IMR-90 (cell line): ENCODE measurements at regions of chr17 and their contacts with region 1.

Region 1: DNA sequence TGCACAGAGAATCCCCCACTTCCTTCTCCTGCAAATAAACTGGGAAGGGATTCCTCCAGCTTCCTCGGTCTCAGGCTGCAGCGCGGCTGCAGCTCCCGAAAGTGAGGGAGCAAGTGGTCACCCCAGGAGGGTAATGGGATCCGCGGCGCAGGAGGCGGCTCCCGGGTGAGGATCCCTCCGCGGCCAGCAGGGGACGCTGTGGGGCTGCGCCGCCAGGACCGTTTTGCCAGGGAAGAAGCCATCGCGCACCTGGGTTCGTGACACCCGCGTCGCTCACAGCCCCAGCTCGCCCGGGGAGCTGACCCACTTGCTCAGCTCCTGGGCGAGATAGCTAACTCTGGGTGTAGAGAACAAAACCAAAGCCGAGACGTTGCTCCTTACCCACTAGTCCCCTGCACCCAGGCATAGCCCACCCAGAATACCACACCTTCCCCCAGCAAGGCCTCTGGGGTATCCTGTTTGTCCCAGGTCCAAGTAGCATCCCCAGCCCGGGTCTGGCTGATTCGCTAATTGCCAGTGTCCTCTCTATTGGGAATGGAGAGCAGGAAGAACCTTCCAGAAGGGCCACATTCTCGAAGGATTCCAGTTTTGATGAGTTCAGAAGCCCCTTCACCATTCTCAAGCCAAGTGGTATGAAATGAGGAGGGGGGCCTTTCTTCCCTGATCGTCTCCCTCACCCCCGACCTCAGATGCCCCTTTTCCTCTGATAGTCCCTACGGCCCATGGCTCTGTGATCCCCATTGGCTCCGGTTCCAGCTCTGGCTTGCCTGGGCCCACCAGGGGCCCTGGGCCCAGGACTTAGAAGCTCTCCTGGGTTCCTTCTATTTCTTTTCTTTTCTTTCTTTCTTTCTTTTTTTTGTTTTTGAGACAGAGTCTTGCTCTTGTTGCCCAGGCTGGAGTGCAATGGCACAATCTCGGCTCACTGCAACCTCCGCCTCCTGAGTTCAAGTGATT is 14.1 kb downstream of the CYGB start:
- DNase-seq: peak; percentile 50
- ATAC-seq: peak; percentile 75
- H3K4me3 ChIP-seq: no peak overlapping the region
- H3K27ac ChIP-seq: no peak overlapping the region
- H3K4me1 ChIP-seq: peaks cover 25% of the 10 kb centered on the region
- H3K27me3 ChIP-seq: no peaks in the 10 kb centered on the region
- CTCF ChIP-seq: peak; percentile 96
- POLR2A ChIP-seq: peak; percentile 53
- RAD21 ChIP-seq: peak; percentile 95

Region 2: DNA sequence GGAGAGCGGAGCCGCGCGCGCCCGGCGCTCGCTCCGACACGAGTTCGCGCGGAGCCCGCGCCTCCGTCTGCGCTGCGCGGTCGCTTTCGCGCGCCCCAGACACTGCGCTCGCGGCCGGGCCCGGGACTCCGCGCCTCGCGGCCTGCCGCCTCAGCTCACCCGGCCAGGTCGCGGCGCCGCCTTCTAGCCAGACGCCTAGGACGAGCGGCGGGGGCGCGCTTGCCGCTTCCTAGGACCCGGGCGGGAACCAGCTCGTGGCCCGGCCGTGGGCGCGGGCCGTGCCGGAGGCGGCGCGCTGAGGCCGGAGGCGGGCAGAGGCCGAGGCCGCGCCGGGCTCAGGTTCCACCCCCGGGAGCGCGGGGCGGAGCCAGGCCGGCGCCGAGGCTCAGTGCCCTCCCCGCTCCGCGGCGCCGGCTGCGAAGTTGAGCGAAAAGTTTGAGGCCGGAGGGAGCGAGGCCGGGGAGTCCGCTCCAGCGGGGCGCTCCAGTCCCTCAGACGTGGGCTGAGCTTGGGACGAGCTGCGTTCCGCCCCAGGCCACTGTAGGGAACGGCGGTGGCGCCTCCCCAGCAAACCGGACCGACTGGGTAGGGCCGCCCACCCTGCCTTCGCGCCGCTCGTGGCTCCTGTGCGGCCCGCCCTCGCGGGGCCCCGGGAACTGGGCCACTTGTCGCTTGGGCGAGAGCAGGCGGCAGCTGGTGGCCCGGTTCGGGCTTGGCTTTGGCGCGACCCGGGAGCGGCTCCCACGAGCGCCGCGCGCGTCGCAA is 139.0 kb before region 1 on chr17 and contains the start of gene SPHK1:
- CTCF ChIA-PET with region 1: no interaction called
- POLR2A ChIA-PET with region 1: no interaction called
- dilution Hi-C with region 1: no loop called
- in situ Hi-C with region 1: no loop called
- intact Hi-C with region 1: no loop called
- DNase-seq: peak; percentile 81
- ATAC-seq: peak; percentile 79
- H3K4me3 ChIP-seq: peak within 1 kb of the TSS; percentile 80
- H3K27ac ChIP-seq: peak within 1 kb of the TSS; percentile 95
- H3K4me1 ChIP-seq: peaks cover 13% of the 10 kb centered on the region
- H3K27me3 ChIP-seq: no peaks in the 10 kb centered on the region
- CTCF ChIP-seq: no peak
- POLR2A ChIP-seq: peak; percentile 86
- RAD21 ChIP-seq: no peak; the same call in 1 of the 2 replicates
- total RNA-seq, gene SPHK1: 44.4 and 45.8 TPM in 2 replicates

Region 3: DNA sequence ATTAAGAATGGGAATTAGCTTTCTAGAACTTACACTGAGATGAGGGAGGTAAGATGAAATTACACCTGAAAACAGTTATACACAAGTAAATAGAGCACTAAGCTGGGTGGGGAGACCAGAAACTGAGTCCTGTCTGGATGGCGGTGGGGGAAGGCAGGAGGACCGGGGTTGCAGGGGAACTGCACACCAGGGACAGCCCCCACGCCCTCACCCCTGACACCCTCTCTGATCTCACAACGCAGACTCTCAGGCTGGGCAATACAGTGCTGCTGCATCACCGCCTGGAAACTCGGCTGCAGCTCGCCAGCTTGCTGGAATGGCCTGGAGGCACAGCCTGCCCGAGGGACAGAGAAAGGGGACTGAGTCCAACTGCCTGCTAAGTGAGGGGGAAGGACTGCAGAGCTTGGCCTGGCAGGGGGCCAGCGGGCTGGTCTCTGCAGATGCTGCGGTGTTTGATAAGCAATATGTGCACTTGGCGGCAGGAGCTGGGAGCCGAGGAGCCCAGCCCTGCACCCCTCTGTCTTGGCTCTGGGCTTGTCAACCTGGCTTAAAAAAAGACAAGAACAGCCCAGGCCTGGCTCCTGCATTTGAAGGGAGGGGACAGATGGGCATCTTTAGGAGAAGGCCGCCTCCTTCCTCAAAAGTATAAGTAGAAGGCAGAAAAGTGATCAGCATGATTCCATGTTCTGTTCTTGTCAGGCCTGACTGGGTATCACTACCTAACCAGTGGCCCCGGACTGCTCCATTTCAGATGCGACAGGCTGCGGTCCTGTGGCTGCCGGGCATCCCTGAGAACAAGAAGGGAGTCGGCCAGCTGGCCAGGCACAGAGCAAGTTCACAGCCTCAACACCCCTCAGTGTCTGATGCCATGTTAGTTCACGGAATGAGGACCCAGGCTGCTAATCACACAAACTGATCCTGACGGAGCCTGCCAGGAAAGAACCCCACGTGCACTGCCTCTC is 108.7 kb before region 1 on chr17:
- CTCF ChIA-PET with region 1: no interaction called
- POLR2A ChIA-PET with region 1: no interaction called
- dilution Hi-C with region 1: no loop called
- in situ Hi-C with region 1: no loop called
- intact Hi-C with region 1: no loop called
- DNase-seq: peak; percentile 69
- ATAC-seq: peak; percentile 86
- H3K4me3 ChIP-seq: no peak overlapping the region
- H3K27ac ChIP-seq: no peak overlapping the region
- H3K4me1 ChIP-seq: peaks cover 7% of the 10 kb centered on the region
- H3K27me3 ChIP-seq: no peaks in the 10 kb centered on the region
- CTCF ChIP-seq: no peak
- POLR2A ChIP-seq: no peak
- RAD21 ChIP-seq: no peak

Region 4: GRCh38 chr17:76540381-76541300 is 17.3 kb after region 1 on chr17:
- CTCF ChIA-PET with region 1: interaction called, 18 read pairs
- POLR2A ChIA-PET with region 1: interaction called, 3 read pairs
- dilution Hi-C with region 1: no loop called
- in situ Hi-C with region 1: no loop called
- intact Hi-C with region 1: no loop called
- DNase-seq: peak; percentile 94
- ATAC-seq: peak; percentile 98
- H3K4me3 ChIP-seq: peak overlapping the region; percentile 27; the same call in 1 of the 2 replicates
- H3K27ac ChIP-seq: peak overlapping the region; percentile 62
- H3K4me1 ChIP-seq: peaks cover 9% of the 10 kb centered on the region
- H3K27me3 ChIP-seq: peaks cover 2% of the 10 kb centered on the region; the same call in 1 of the 2 replicates
- CTCF ChIP-seq: 0 out of 2 replicates have a peak, but pooled peaks have one; percentile 2
- POLR2A ChIP-seq: no peak
- RAD21 ChIP-seq: no peak

Region 5: GRCh38 chr17:76547184-76547641 is 23.9 kb after region 1 on chr17:
- CTCF ChIA-PET with region 1: interaction called, 12 read pairs
- POLR2A ChIA-PET with region 1: interaction called, 3 read pairs
- dilution Hi-C with region 1: no loop called
- in situ Hi-C with region 1: no loop called
- intact Hi-C with region 1: loop called (anchors 1 kb)
- DNase-seq: peak; percentile 85
- ATAC-seq: peak; percentile 79
- H3K4me3 ChIP-seq: no peak overlapping the region
- H3K27ac ChIP-seq: peak overlapping the region; percentile 38
- H3K4me1 ChIP-seq: peaks cover 20% of the 10 kb centered on the region
- H3K27me3 ChIP-seq: no peaks in the 10 kb centered on the region
- CTCF ChIP-seq: peak; percentile 88
- POLR2A ChIP-seq: no peak
- RAD21 ChIP-seq: peak; percentile 85

Region 6: GRCh38 chr17:76612977-76613851 is 89.9 kb after region 1 on chr17:
- CTCF ChIA-PET with region 1: no interaction called
- POLR2A ChIA-PET with region 1: no interaction called
- dilution Hi-C with region 1: no loop called
- in situ Hi-C with region 1: no loop called
- intact Hi-C with region 1: no loop called
- DNase-seq: no peak
- ATAC-seq: no peak
- H3K4me3 ChIP-seq: no peak overlapping the region
- H3K27ac ChIP-seq: no peak overlapping the region
- H3K4me1 ChIP-seq: no peaks in the 10 kb centered on the region
- H3K27me3 ChIP-seq: 0 out of 2 replicates have a peak, but pooled peaks cover 2% of the 10 kb centered on the region
- CTCF ChIP-seq: no peak
- POLR2A ChIP-seq: no peak
- RAD21 ChIP-seq: no peak

Region 7: GRCh38 chr17:76623271-76624146 is 100.1 kb after region 1 on chr17:
- CTCF ChIA-PET with region 1: interaction called, 7 read pairs
- POLR2A ChIA-PET with region 1: no interaction called
- dilution Hi-C with region 1: no loop called
- in situ Hi-C with region 1: loop called (anchors 5 kb)
- intact Hi-C with region 1: loop called (anchors 1 kb)
- DNase-seq: peak; percentile 60
- ATAC-seq: peak; percentile 100
- H3K4me3 ChIP-seq: no peak overlapping the region
- H3K27ac ChIP-seq: no peak overlapping the region
- H3K4me1 ChIP-seq: peaks cover 2% of the 10 kb centered on the region; the same call in 1 of the 2 replicates
- H3K27me3 ChIP-seq: peaks cover 17% of the 10 kb centered on the region
- CTCF ChIP-seq: peak; percentile 94
- POLR2A ChIP-seq: no peak
- RAD21 ChIP-seq: peak; percentile 92

Region 8: DNA sequence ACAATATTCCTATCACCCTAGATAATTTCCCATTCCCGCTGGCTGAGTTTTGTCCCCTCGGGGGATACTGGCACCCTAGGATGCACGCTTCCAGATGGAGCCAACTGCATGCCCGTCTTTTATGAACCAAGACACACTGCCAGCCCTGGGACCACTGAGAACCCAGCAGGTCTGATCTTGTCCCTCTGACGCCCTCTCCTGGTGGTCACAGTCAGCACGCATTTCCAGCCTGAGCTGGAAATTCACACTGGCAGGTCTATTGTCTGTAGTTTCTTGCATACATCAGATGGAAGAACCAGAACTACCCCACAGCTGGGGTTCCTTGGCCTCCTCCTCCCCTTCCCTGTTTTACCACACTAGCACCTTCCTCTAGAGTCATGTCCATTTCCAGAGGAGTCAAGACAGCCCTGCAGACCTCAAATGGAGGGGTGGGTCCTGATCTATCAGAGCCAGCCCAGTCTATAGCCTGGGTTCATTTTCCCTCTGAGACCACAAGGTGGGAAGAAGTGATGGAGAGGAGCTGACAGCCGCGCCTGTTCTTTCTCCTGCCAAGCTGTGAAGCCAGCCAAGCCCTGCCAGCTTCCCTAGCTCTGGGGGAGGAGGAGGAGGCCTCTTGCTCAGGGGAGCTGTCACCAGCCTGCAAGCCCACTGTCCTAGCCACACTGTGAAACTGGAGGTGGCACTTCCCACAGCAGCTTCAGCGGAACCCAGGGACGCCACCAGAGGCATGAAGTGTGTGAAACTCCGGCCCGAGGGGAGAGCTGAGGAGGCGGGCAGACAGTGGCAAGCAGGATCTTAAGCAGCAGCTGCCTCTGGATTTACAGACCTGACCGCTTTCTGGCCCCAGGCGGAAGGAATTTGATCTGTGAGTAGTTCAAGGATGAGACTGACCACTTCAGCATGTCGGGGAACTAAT is 158.1 kb after region 1 on chr17:
- CTCF ChIA-PET with region 1: interaction called, 4 read pairs
- POLR2A ChIA-PET with region 1: no interaction called
- dilution Hi-C with region 1: no loop called
- in situ Hi-C with region 1: no loop called
- intact Hi-C with region 1: loop called (anchors 2 kb)
- DNase-seq: peak; percentile 63
- ATAC-seq: peak; percentile 78
- H3K4me3 ChIP-seq: no peak overlapping the region
- H3K27ac ChIP-seq: no peak overlapping the region
- H3K4me1 ChIP-seq: peaks cover 7% of the 10 kb centered on the region
- H3K27me3 ChIP-seq: no peaks in the 10 kb centered on the region
- CTCF ChIP-seq: peak; percentile 78
- POLR2A ChIP-seq: peak; percentile 23; the same call in 1 of the 2 replicates
- RAD21 ChIP-seq: peak; percentile 79

Region 9: GRCh38 chr17:76709077-76709950 is 186.0 kb after region 1 on chr17:
- CTCF ChIA-PET with region 1: no interaction called
- POLR2A ChIA-PET with region 1: no interaction called
- dilution Hi-C with region 1: no loop called
- in situ Hi-C with region 1: no loop called
- intact Hi-C with region 1: loop called (anchors 1 kb)
- DNase-seq: peak; percentile 99
- ATAC-seq: peak; percentile 74
- H3K4me3 ChIP-seq: peak overlapping the region; percentile 58
- H3K27ac ChIP-seq: peak overlapping the region; percentile 90
- H3K4me1 ChIP-seq: peaks cover 27% of the 10 kb centered on the region
- H3K27me3 ChIP-seq: no peaks in the 10 kb centered on the region
- CTCF ChIP-seq: 0 out of 2 replicates have a peak, but pooled peaks have one; percentile 8
- POLR2A ChIP-seq: peak; percentile 97
- RAD21 ChIP-seq: no peak

Region 10: DNA sequence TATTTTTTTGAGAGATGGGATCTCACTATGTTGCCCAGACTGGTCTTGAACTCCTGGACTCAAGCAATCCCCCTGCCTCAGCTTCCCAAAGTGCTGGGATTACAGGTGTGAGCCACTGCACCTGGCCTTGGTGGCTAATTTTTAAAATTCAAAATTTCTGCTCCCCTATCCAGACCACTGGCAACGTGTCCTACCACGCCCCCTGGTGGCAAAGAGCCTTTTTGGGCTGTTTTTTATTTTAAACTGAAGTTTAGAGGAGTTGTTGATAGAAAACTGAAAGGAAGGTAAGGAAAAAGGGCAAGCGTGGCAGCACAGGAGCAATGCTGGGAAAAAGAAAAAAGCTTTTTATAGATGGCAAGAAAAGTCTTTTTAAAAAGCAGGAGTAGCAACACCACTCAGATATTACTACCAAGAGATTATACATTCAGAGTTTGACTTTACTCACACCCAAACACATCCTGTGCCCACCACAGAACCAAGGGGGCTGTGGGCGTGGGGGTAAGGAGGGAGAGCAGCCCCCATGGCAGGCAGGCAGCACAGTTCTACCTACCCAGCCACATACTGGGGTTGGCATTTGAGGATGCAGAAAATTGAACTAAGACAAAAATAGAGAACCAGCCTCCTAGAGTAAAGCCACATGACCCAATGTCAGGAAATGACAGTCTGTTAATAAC is 191.6 kb after region 1 on chr17:
- CTCF ChIA-PET with region 1: no interaction called
- POLR2A ChIA-PET with region 1: no interaction called
- dilution Hi-C with region 1: no loop called
- in situ Hi-C with region 1: no loop called
- intact Hi-C with region 1: loop called (anchors 2 kb)
- DNase-seq: peak; percentile 59
- ATAC-seq: no peak
- H3K4me3 ChIP-seq: no peak overlapping the region
- H3K27ac ChIP-seq: peak overlapping the region; percentile 31; the same call in 1 of the 2 replicates
- H3K4me1 ChIP-seq: peaks cover 18% of the 10 kb centered on the region
- H3K27me3 ChIP-seq: no peaks in the 10 kb centered on the region
- CTCF ChIP-seq: peak; percentile 77
- POLR2A ChIP-seq: no peak; the same call in 1 of the 2 replicates
- RAD21 ChIP-seq: peak; percentile 65